Calu3 (cell line): ENCODE measurements at regions of chr3 and their contacts with region 1.

Region 1: GRCh38 chr3:135869439-135870105 is 96.0 kb upstream of the PPP2R3A start:
- DNase-seq: no peak
- H3K4me3 Mint-ChIP-seq: no peak overlapping the region
- H3K27ac Mint-ChIP-seq: no peak overlapping the region
- H3K4me1 Mint-ChIP-seq: no peaks in the 10 kb centered on the region
- H3K27me3 Mint-ChIP-seq: peaks cover 12% of the 10 kb centered on the region
- CTCF ChIP-seq: no peak

Region 2: GRCh38 chr3:135895106-135895733 is 25.6 kb after region 1 on chr3:
- CTCF ChIA-PET with region 1: no interaction called
- intact Hi-C with region 1: no loop called
- DNase-seq: peak; percentile 90
- H3K4me3 Mint-ChIP-seq: no peak overlapping the region
- H3K27ac Mint-ChIP-seq: peak overlapping the region; percentile 70
- H3K4me1 Mint-ChIP-seq: peaks cover 27% of the 10 kb centered on the region
- H3K27me3 Mint-ChIP-seq: no peaks in the 10 kb centered on the region
- CTCF ChIP-seq: peak; percentile 95

Region 3: DNA sequence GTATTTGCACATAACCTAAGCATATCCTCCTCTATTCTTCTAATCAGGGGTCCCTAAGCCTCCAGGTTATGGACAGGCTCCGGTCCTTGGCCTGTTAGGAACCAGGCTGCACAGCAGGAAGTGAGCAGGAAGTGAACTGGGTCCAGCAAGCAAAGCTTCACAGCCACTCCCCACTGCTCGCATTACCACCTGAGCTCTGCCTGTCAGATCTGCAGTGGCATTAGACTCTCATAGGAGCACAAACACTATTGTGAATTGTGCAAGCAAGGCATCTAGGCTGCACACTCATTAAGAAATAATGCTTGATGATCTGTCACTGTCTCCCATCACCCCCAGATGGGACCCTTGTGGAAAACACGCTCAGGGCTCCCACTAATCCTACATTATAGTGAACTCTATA is 316.8 kb after region 1 on chr3:
- CTCF ChIA-PET with region 1: no interaction called
- intact Hi-C with region 1: no loop called
- DNase-seq: peak; percentile 68
- H3K4me3 Mint-ChIP-seq: no peak overlapping the region
- H3K27ac Mint-ChIP-seq: peak overlapping the region; percentile 48
- H3K4me1 Mint-ChIP-seq: peaks cover 74% of the 10 kb centered on the region
- H3K27me3 Mint-ChIP-seq: no peaks in the 10 kb centered on the region
- CTCF ChIP-seq: no peak

Region 4: DNA sequence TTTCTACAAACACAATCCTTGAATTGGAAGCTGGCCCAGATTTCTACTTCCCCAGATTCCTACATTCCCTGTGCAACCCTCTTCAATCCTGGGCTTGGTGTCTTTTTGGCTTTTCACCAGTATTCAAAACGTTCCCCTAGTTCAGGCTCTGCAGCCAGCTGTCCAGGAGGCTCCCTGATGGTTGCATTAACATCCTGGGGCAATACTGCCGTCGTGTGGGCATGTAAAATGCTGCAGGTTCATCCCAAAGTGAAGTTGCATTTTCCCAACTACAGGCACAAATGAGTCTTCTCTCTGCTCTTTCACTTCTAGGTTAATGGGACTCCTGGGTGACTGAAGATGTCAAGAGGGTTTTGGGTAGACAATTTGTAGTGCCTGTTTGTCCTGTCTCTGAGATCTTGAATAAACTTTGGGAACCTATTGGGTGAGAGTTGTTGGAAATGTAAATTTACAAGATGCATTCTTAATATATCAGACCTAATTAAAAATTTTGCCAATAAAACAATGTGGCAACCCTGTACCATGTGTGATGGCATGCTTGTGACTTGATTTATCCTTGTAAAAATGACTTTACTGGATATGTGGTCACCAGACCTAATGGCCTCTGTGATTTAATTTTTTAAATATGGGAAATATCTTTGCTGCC is 1923.2 kb after region 1 on chr3:
- CTCF ChIA-PET with region 1: no interaction called
- intact Hi-C with region 1: loop called (anchors 5 kb)
- DNase-seq: peak; percentile 51
- H3K4me3 Mint-ChIP-seq: no peak overlapping the region
- H3K27ac Mint-ChIP-seq: no peak overlapping the region
- H3K4me1 Mint-ChIP-seq: no peaks in the 10 kb centered on the region
- H3K27me3 Mint-ChIP-seq: peaks cover 2% of the 10 kb centered on the region
- CTCF ChIP-seq: peak; percentile 37